Heart right ventricle (tissue), 16 donors: ENCODE measurements at regions of chr19 and their contacts with region 1.

Region 1: GRCh38 chr19:35468637-35469036 is 20.6 kb downstream of the FFAR2 start:
- DNase-seq: peak; percentile 18 to 36
- ATAC-seq: peak; percentile 74 to 95 (median 80)
- H3K4me3 ChIP-seq: no peak overlapping the region
- H3K27ac ChIP-seq: no peak overlapping the region
- H3K4me1 ChIP-seq: peaks cover 0 to 11% (median 0%) of the 10 kb centered on the region in 9 donors
- H3K27me3 ChIP-seq: no peaks in the 10 kb centered on the region
- CTCF ChIP-seq: peak; percentile 24 to 74 (median 64)

Region 2: DNA sequence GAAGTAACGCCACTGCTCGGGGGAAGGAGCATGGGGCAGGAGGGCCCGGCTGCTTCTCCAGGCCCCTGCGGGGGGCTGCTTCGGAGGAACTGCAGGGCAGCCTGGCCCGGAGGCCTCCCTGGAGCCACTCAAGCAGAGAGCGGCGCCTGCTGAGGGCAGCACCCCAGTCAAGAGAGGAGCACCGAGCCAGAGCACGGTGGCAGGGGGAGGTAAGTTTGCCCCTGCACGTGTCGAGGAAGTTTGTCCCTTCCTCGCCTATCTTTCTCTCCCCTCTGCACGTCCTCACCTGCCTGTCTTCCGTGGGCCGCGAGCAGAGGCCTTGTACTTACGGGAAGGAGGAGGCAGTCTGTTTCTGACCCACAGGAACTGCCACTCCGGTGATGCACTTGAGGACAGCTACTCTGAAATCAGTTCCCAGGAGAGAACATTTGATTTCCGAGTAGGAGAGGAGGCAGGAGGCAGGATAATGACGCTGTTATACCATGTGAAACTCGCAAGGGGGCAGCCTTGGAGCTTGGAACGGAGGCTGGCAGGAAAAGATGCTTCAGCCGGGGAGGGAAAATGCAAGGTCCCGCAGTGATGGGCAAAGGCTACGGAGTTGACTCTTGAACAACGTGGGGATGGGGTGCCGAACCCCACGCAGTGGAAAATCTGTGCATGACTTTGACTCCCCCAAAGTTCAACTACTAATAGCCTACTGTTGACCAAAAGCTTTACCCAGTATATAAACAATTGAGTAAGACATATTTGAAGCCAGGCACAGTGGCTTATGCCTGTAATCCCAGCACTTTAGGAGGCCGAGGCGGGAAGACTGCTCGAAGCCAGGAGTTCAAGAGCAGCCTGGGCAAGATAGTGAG is 116.0 kb before region 1 on chr19:
- intact Hi-C with region 1: loop called (anchors 1 to 5 kb)
- DNase-seq: peak; percentile 50 to 73
- ATAC-seq: peak; percentile 44 to 83 (median 66)
- H3K4me3 ChIP-seq: no peak overlapping the region
- H3K27ac ChIP-seq: peak overlapping the region in 1 of 10 donors; percentile 10
- H3K4me1 ChIP-seq: peaks cover 0 to 25% (median 0%) of the 10 kb centered on the region in 9 donors
- H3K27me3 ChIP-seq: peaks cover 0 to 26% (median 10%) of the 10 kb centered on the region in 7 donors
- CTCF ChIP-seq: peak; percentile 66 to 84 (median 78)

Region 3: GRCh38 chr19:35357867-35358573 is 110.6 kb before region 1 on chr19 and contains the start of gene FFAR3:
- intact Hi-C with region 1: loop called in 8 of 10 experiments (anchors 1 to 5 kb)
- DNase-seq: peak in 1 of 2 donors; percentile 29
- ATAC-seq: peak in 7 of 8 donors; percentile 33 to 84 (median 67)
- H3K4me3 ChIP-seq: no peak within 1 kb of the TSS
- H3K27ac ChIP-seq: no peak within 1 kb of the TSS
- H3K4me1 ChIP-seq: peaks cover 0 to 19% (median 6%) of the 10 kb centered on the region in 9 donors
- H3K27me3 ChIP-seq: peaks cover 0 to 4% (median 0%) of the 10 kb centered on the region in 7 donors
- CTCF ChIP-seq: no peak
- total RNA-seq, gene FFAR3: 0.40 to 0.49 TPM in 2 of 10 donors, not detected in the others

Region 4: DNA sequence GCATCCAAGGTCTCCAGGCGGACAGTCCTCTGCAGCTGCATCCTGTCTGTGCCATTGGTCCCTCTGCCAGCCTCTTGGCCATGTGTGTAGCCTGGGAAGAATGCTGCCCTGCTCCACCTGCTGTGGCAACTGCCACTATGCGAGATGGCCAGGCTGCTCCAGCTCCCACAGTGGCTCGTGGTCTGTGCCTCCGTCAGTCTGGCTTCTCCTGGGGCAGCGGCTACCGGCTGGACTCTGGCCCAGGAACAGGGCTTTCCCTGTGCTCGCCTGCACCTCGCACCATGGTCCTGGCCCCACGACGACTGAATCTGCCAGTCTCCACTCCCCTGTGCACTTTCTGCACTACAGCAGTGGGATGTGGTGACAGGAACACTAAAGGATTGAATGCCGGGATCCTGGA is 47.3 kb before region 1 on chr19:
- intact Hi-C with region 1: loop called in 1 of 10 experiments (anchors 5 kb)
- DNase-seq: no peak
- ATAC-seq: no peak
- H3K4me3 ChIP-seq: no peak overlapping the region
- H3K27ac ChIP-seq: no peak overlapping the region
- H3K4me1 ChIP-seq: peaks cover 0 to 8% (median 0%) of the 10 kb centered on the region in 9 donors
- H3K27me3 ChIP-seq: peaks cover 0 to 14% (median 0%) of the 10 kb centered on the region in 7 donors
- CTCF ChIP-seq: no peak